AG04449 (cell line): ENCODE measurements at regions of chr10 and their contacts with region 1.

Region 1: GRCh38 chr10:101161494-101162299 is 30.6 kb downstream of the TLX1 start:
- DNase-seq: no peak
- H3K4me3 ChIP-seq: peak overlapping the region; percentile 51
- CTCF ChIP-seq: peak; percentile 94

Region 2: DNA sequence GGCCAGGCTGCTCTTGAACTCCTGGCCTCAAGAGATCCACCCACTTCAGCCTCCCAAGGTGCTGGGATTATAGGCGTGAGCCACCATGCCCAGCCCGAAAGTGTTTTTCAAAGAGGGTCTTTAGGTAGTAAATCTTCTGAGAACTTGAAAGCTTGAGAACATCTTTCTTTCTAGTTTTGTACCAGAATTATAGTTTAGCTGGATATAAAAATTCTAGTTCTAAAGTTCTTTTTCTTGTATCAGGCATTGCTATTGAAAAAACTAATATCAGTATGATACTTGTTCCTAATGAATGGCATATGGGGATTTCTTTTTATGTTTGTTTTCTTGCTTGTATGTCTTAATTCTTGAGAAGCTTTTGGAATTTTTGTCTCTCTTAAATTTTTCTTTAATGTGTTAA is 12.6 kb after region 1 on chr10:
- CTCF ChIA-PET with region 1: interaction called, 25 read pairs
- POLR2A ChIA-PET with region 1: no interaction called
- DNase-seq: no peak
- H3K4me3 ChIP-seq: no peak overlapping the region
- CTCF ChIP-seq: no peak